WTC11 (cell line): ENCODE measurements at regions of chr11 and their contacts with region 1.

Region 1: GRCh38 chr11:447923-448731 is 2.0 kb upstream of the PTDSS2 start:
- DNase-seq: peak; percentile 96
- ATAC-seq: peak; percentile 62
- H3K4me3 Mint-ChIP-seq: peak overlapping the region; percentile 82
- H3K27ac Mint-ChIP-seq: peak overlapping the region; percentile 94
- H3K4me1 Mint-ChIP-seq: peaks cover 14% of the 10 kb centered on the region
- H3K27me3 Mint-ChIP-seq: peaks cover 3% of the 10 kb centered on the region; the same call in 1 of the 2 replicates
- CTCF ChIP-seq: peak; percentile 45; the same call in 1 of the 2 replicates

Region 2: GRCh38 chr11:390175-390574 is 58.0 kb before region 1 on chr11:
- CTCF ChIA-PET with region 1: interaction called, 15 read pairs
- POLR2A ChIA-PET with region 1: no interaction called
- DNase-seq: peak; percentile 80
- ATAC-seq: peak; percentile 52
- H3K4me3 Mint-ChIP-seq: no peak overlapping the region
- H3K27ac Mint-ChIP-seq: no peak overlapping the region
- H3K4me1 Mint-ChIP-seq: peaks cover 6% of the 10 kb centered on the region
- H3K27me3 Mint-ChIP-seq: peaks cover 17% of the 10 kb centered on the region
- CTCF ChIP-seq: peak; percentile 27; the same call in 1 of the 2 replicates

Region 3: GRCh38 chr11:396948-397548 is 51.1 kb before region 1 on chr11:
- CTCF ChIA-PET with region 1: interaction called, 13 read pairs
- POLR2A ChIA-PET with region 1: no interaction called
- DNase-seq: no peak
- ATAC-seq: no peak
- H3K4me3 Mint-ChIP-seq: no peak overlapping the region
- H3K27ac Mint-ChIP-seq: no peak overlapping the region
- H3K4me1 Mint-ChIP-seq: peaks cover 6% of the 10 kb centered on the region
- H3K27me3 Mint-ChIP-seq: peaks cover 8% of the 10 kb centered on the region
- CTCF ChIP-seq: no peak

Region 4: DNA sequence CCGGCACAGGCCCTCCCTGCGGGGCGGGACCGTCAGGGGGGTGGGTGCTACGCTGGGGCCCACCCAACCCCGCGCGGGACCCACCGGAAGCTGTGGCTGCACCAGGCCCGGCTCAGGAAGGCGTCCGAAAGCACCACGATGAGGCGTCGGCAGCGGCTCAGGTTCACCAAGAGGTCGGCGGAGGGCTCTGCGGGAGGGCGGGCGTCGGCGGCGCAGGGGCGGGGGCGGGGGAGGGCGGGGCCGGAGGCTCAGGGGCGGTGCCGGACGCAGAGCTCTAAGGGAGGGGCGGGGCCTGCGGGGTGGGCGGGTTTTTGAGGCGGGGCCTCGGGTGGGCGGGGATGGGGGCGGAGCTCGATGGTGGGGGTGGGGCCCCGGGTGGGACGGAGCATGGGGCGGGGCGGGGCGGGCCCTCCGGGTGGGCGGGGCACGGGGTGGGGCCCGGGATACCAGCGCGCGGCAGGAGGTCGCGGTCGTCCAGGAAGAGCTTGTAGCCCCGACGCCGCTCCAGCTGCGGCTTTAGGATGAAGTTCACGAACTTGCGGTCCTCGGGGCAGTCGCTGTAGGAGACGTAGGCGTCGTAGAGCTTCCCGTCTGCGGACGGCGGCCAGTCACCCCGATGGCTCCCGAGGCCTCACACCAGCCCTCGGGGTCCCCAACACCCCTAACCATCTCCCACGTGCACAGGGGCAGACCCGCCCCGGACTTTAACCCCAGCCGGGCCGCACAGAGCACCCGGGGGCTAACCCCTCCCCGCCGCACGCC is 41.0 kb before region 1 on chr11:
- CTCF ChIA-PET with region 1: interaction called, 71 read pairs
- POLR2A ChIA-PET with region 1: interaction called, 9 read pairs
- DNase-seq: peak; percentile 81
- ATAC-seq: peak; percentile 52
- H3K4me3 Mint-ChIP-seq: peak overlapping the region; percentile 30; the same call in 1 of the 2 replicates
- H3K27ac Mint-ChIP-seq: no peak overlapping the region
- H3K4me1 Mint-ChIP-seq: no peaks in the 10 kb centered on the region
- H3K27me3 Mint-ChIP-seq: no peaks in the 10 kb centered on the region
- CTCF ChIP-seq: no peak

Region 5: DNA sequence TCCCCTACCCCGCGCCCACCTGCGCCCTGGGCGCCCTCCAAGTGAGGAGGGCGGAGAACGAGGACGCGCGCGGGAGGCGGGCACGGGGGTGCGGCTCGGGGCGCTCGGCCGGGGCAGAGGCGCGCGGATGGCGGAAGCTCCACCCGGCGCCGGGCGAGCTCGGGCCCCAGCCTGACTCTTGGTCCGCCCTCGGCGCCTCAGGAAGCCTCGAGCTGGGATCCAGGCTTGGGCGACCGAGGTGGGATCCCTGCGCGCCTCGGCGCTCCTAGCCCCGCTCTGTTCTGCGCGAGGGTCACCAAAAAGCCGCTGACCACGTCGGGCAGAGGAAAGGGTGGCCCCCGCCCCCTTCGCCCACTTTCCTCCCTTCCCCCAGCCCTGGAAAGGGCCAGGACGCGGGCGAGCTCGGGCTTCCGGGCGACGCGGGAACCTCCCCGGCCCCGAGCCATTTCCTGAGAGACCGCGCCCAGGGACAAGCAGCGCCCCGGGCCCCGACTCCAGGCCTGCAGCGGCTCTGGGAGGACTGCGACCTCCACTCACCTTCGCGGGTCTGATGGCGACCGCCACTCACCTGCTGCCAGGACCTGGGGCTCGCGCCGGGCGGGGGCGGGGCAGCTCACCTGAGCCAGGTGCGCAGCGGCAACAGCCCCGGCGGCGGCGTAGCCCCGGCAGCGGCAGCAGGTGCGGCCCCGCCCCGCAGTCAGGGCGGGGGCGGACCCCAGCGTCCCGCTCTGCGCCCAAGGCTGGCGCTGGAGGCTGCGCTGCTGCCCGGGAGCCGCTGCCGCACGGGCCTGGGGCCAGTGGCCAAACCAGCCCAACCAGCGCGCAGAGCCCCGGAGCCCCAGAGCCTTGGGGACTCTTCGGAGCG is 31.1 kb before region 1 on chr11:
- CTCF ChIA-PET with region 1: interaction called, 35 read pairs
- POLR2A ChIA-PET with region 1: interaction called, 6 read pairs
- DNase-seq: peak; percentile 88
- ATAC-seq: peak; percentile 84
- H3K4me3 Mint-ChIP-seq: peak overlapping the region; percentile 74
- H3K27ac Mint-ChIP-seq: no peak overlapping the region
- H3K4me1 Mint-ChIP-seq: peaks cover 23% of the 10 kb centered on the region
- H3K27me3 Mint-ChIP-seq: peaks cover 10% of the 10 kb centered on the region
- CTCF ChIP-seq: no peak

Region 6: DNA sequence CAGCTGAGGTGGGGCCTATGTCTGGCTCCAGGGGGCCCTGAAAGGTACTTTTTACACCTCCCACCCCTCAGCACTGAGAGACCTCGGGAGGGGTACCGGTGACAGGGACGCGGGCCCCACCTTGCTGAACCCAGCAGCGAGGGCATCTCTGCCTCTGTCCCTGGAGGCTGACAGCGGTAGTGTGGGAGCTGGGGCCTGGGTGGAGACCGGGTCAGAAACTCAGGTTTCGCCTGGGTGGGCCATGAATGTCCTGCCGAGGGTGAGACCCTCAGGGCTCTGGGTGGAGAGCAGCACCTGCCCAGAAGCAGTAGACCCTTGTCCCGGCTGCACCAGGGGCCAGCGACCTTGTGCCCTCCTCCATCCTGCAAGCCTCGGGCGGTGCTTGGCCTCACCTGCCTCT is 24.1 kb after region 1 on chr11:
- CTCF ChIA-PET with region 1: interaction called, 10 read pairs
- POLR2A ChIA-PET with region 1: interaction called, 4 read pairs
- DNase-seq: no peak
- ATAC-seq: peak; percentile 36
- H3K4me3 Mint-ChIP-seq: no peak overlapping the region
- H3K27ac Mint-ChIP-seq: no peak overlapping the region
- H3K4me1 Mint-ChIP-seq: peaks cover 21% of the 10 kb centered on the region
- H3K27me3 Mint-ChIP-seq: no peaks in the 10 kb centered on the region
- CTCF ChIP-seq: no peak

Region 7: DNA sequence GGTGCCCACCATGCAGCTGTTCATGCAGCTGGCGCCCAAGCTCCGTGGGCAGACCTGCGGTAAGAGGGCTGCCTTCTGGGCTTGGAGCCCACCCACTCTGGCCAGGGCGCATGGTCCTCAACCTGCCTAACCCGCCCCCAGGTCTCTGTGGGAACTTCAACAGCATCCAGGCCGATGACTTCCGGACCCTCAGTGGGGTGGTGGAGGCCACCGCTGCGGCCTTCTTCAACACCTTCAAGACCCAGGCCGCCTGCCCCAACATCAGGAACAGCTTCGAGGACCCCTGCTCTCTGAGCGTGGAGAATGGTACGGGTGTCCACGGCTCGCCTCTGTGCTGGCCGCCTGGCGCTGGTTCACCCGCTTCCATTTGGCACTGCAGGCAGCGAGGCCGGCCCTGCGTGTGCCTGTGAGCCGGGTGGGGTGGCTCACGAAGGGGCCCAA is 720.6 kb after region 1 on chr11:
- CTCF ChIA-PET with region 1: no interaction called
- POLR2A ChIA-PET with region 1: no interaction called
- DNase-seq: no peak
- ATAC-seq: no peak
- H3K4me3 Mint-ChIP-seq: no peak overlapping the region
- H3K27ac Mint-ChIP-seq: no peak overlapping the region
- H3K4me1 Mint-ChIP-seq: no peaks in the 10 kb centered on the region
- H3K27me3 Mint-ChIP-seq: no peaks in the 10 kb centered on the region
- CTCF ChIP-seq: no peak